B cell (primary cell): ENCODE measurements at regions of chr19 and their contacts with region 1.

Region 1: GRCh38 chr19:18152444-18152816 is 533 bp upstream of the PIK3R2 start:
- DNase-seq: peak; percentile 100
- ATAC-seq: peak; percentile 71
- H3K4me3 ChIP-seq: peak overlapping the region; percentile 63 to 88 (median 70)
- H3K4me3 Mint-ChIP-seq: peak overlapping the region; percentile 89
- H3K27ac ChIP-seq: peak overlapping the region; percentile 90 to 93
- H3K27ac Mint-ChIP-seq: peak overlapping the region; percentile 95
- H3K4me1 ChIP-seq: peaks cover 14 to 25% of the 10 kb centered on the region in 2 donors
- H3K4me1 Mint-ChIP-seq: peaks cover 23% of the 10 kb centered on the region
- H3K27me3 ChIP-seq: no peaks in the 10 kb centered on the region
- H3K27me3 Mint-ChIP-seq: no peaks in the 10 kb centered on the region
- CTCF ChIP-seq: peak; percentile 88

Region 2: GRCh38 chr19:17932485-17933338 is 219.7 kb before region 1 on chr19 and contains the start of gene CCDC124:
- CTCF ChIA-PET with region 1: interaction called, 8 read pairs
- POLR2A ChIA-PET with region 1: no interaction called
- intact Hi-C with region 1: loop called (anchors 2 kb)
- DNase-seq: peak; percentile 97
- ATAC-seq: peak; percentile 95
- H3K4me3 ChIP-seq: peak within 1 kb of the TSS; percentile 72 to 88 (median 79)
- H3K4me3 Mint-ChIP-seq: peak within 1 kb of the TSS; percentile 96
- H3K27ac ChIP-seq: peak within 1 kb of the TSS; percentile 93 to 96
- H3K27ac Mint-ChIP-seq: peak within 1 kb of the TSS; percentile 97
- H3K4me1 ChIP-seq: peaks cover 11 to 19% of the 10 kb centered on the region in 2 donors
- H3K4me1 Mint-ChIP-seq: peaks cover 22% of the 10 kb centered on the region
- H3K27me3 ChIP-seq: no peaks in the 10 kb centered on the region
- H3K27me3 Mint-ChIP-seq: no peaks in the 10 kb centered on the region
- CTCF ChIP-seq: peak; percentile 90
- total RNA-seq, gene CCDC124: 25.0 and 26.9 TPM in 2 replicates

Region 3: GRCh38 chr19:18117692-18118378 is 34.6 kb before region 1 on chr19:
- CTCF ChIA-PET with region 1: interaction called, 16 read pairs
- POLR2A ChIA-PET with region 1: interaction called, 9 read pairs
- intact Hi-C with region 1: loop called (anchors 1 kb)
- DNase-seq: peak; percentile 96
- ATAC-seq: peak; percentile 94
- H3K4me3 ChIP-seq: peak overlapping the region in 4 of 5 experiments; percentile 64 to 71 (median 66)
- H3K4me3 Mint-ChIP-seq: peak overlapping the region; percentile 86
- H3K27ac ChIP-seq: peak overlapping the region; percentile 47 to 76
- H3K27ac Mint-ChIP-seq: peak overlapping the region; percentile 85
- H3K4me1 ChIP-seq: peaks cover 30 to 36% of the 10 kb centered on the region in 2 donors
- H3K4me1 Mint-ChIP-seq: peaks cover 52% of the 10 kb centered on the region
- H3K27me3 ChIP-seq: no peaks in the 10 kb centered on the region
- H3K27me3 Mint-ChIP-seq: no peaks in the 10 kb centered on the region
- CTCF ChIP-seq: no peak

Region 4: GRCh38 chr19:18224525-18225354 is 72.3 kb after region 1 on chr19:
- CTCF ChIA-PET with region 1: no interaction called
- POLR2A ChIA-PET with region 1: interaction called, 3 read pairs
- intact Hi-C with region 1: loop called (anchors 2 kb)
- DNase-seq: peak; percentile 93
- ATAC-seq: peak; percentile 99
- H3K4me3 ChIP-seq: peak overlapping the region; percentile 21 to 68 (median 46)
- H3K4me3 Mint-ChIP-seq: peak overlapping the region; percentile 91
- H3K27ac ChIP-seq: no peak overlapping the region
- H3K27ac Mint-ChIP-seq: peak overlapping the region; percentile 71
- H3K4me1 ChIP-seq: peaks cover 29 to 36% of the 10 kb centered on the region in 2 donors
- H3K4me1 Mint-ChIP-seq: peaks cover 36% of the 10 kb centered on the region
- H3K27me3 ChIP-seq: peaks cover 0 to 85% (median 41%) of the 10 kb centered on the region in 4 experiments
- H3K27me3 Mint-ChIP-seq: peaks cover 53% of the 10 kb centered on the region
- CTCF ChIP-seq: no peak